Endothelial cell of umbilical vein (primary cell): ENCODE measurements at regions of chr6 and their contacts with region 1.

Region 1: DNA sequence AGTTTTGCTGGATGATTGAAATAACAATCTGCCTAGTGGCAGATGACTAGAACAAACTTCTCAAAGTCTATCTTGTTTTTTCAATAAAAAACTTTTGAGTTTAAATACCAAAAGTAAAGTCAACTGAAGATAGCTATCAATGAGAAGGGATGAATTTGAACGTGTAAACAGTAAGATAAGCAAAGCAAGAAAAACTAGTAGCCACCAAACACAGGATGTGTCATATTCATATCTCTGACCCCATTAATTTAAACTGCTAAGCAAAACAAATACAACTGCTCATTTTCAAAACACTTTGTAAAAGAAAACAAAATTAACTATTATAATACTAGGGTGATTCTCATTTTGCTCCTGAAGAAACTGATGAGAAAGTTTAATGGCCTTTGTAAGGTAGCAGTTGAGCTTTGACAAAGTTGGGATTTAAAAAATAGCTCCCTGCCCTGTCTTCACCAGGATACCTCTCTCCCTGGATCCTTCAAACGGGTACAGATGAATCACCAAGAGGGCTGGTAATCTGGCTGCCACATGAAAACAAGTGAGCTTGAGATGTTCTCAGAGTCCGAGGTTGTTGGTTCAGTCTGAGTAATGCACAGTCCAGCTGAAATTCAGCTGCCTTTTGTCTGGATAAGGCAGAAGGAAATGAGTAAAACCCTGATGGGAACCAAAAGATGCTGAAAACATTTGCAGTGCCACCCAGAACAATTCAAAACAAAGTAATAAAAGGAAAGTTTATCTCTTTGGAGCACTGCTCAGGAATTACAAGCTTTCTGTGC is 86.6 kb downstream of the GJA1 start:
- DNase-seq: peak; percentile 99
- H3K4me3 ChIP-seq: peak overlapping the region in 1 of 3 experiments; percentile 20
- H3K27ac ChIP-seq: peak overlapping the region; percentile 100
- H3K4me1 ChIP-seq: peaks cover 49% of the 10 kb centered on the region
- H3K27me3 ChIP-seq: no peaks in the 10 kb centered on the region
- CTCF ChIP-seq: no peak
- POLR2A ChIP-seq: peak; percentile 82

Region 2: GRCh38 chr6:120918137-120918536 is 603.9 kb before region 1 on chr6:
- CTCF ChIA-PET with region 1: no interaction called
- POLR2A ChIA-PET with region 1: no interaction called
- dilution Hi-C with region 1: no loop called
- intact Hi-C with region 1: no loop called
- DNase-seq: no peak
- H3K4me3 ChIP-seq: no peak overlapping the region
- H3K27ac ChIP-seq: no peak overlapping the region
- H3K4me1 ChIP-seq: no peaks in the 10 kb centered on the region
- H3K27me3 ChIP-seq: no peaks in the 10 kb centered on the region
- CTCF ChIP-seq: no peak
- POLR2A ChIP-seq: no peak

Region 3: GRCh38 chr6:121443971-121444541 is 78.0 kb before region 1 on chr6:
- CTCF ChIA-PET with region 1: interaction called, 41 read pairs
- POLR2A ChIA-PET with region 1: interaction called, 94 read pairs
- dilution Hi-C with region 1: no loop called
- intact Hi-C with region 1: no loop called
- DNase-seq: peak; percentile 70
- H3K4me3 ChIP-seq: no peak overlapping the region
- H3K27ac ChIP-seq: peak overlapping the region; percentile 28
- H3K4me1 ChIP-seq: peaks cover 43% of the 10 kb centered on the region
- H3K27me3 ChIP-seq: no peaks in the 10 kb centered on the region
- CTCF ChIP-seq: no peak
- POLR2A ChIP-seq: no peak

Region 4: GRCh38 chr6:121630716-121631115 is 108.6 kb after region 1 on chr6:
- CTCF ChIA-PET with region 1: interaction called, 5 read pairs
- POLR2A ChIA-PET with region 1: no interaction called
- dilution Hi-C with region 1: no loop called
- intact Hi-C with region 1: loop called (anchors 1 kb)
- DNase-seq: peak; percentile 80
- H3K4me3 ChIP-seq: no peak overlapping the region
- H3K27ac ChIP-seq: no peak overlapping the region
- H3K4me1 ChIP-seq: peaks cover 16% of the 10 kb centered on the region
- H3K27me3 ChIP-seq: no peaks in the 10 kb centered on the region
- CTCF ChIP-seq: no peak
- POLR2A ChIP-seq: no peak

Region 5: GRCh38 chr6:121694389-121695251 is 172.5 kb after region 1 on chr6:
- CTCF ChIA-PET with region 1: no interaction called
- POLR2A ChIA-PET with region 1: no interaction called
- dilution Hi-C with region 1: no loop called
- intact Hi-C with region 1: no loop called
- DNase-seq: peak; percentile 34
- H3K4me3 ChIP-seq: no peak overlapping the region
- H3K27ac ChIP-seq: no peak overlapping the region
- H3K4me1 ChIP-seq: peaks cover 11% of the 10 kb centered on the region
- H3K27me3 ChIP-seq: no peaks in the 10 kb centered on the region
- CTCF ChIP-seq: no peak
- POLR2A ChIP-seq: no peak

Region 6: DNA sequence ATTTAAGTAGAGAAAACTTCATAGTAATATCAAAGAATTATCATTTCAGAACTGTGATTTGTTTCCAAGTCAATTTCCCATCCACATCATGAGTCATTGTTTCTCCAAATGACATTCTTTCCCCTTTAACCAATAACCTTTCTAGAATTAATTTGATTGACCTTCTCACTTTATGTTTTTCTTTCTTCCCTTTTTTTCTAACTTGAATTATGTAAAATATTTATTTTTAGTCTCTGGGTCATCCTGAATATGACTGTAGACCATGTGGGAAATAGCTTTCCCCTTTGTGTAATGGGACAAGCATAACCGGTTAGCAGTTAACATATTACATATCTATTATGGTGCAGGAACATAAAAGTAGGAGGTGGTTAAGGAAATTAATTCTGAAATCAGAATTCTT is 204.5 kb after region 1 on chr6:
- CTCF ChIA-PET with region 1: no interaction called
- POLR2A ChIA-PET with region 1: no interaction called
- dilution Hi-C with region 1: no loop called
- intact Hi-C with region 1: loop called (anchors 2 kb)
- DNase-seq: peak; percentile 83
- H3K4me3 ChIP-seq: no peak overlapping the region
- H3K27ac ChIP-seq: peak overlapping the region; percentile 29
- H3K4me1 ChIP-seq: peaks cover 10% of the 10 kb centered on the region
- H3K27me3 ChIP-seq: no peaks in the 10 kb centered on the region
- CTCF ChIP-seq: no peak
- POLR2A ChIP-seq: no peak

Region 7: DNA sequence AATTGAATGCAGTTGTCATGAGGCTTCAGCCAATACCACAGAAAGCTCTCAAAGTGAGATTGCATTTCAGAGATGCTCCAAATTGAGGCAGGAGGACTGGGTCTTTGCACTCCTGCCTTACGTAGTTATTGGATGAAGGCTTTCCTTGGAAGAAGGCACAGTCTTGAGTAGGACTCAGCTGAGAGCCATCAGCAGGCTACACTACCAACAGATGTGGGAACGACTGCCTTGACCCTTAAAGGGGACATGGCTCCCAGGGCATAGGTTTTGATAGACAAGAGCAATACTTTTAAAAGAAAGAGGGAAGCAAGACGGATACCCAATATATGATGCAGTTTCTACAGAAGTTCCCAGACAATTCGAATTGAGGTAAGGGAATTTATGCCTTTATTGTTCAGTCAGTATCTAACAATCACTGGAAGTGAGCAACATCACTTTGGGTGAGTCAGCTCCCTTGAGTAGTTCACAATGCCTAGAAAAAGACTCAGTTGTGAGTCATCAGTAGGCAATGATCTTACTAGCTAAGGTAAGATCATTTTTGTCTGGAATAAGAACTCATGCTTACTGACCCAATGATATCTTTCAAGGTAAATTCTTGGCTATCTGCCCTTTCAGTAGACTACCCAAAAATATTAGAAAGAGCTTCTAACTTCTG is 304.2 kb after region 1 on chr6:
- CTCF ChIA-PET with region 1: no interaction called
- POLR2A ChIA-PET with region 1: no interaction called
- dilution Hi-C with region 1: no loop called
- intact Hi-C with region 1: loop called (anchors 1 kb)
- DNase-seq: peak; percentile 94
- H3K4me3 ChIP-seq: no peak overlapping the region
- H3K27ac ChIP-seq: peak overlapping the region; percentile 86
- H3K4me1 ChIP-seq: peaks cover 15% of the 10 kb centered on the region
- H3K27me3 ChIP-seq: no peaks in the 10 kb centered on the region
- CTCF ChIP-seq: no peak
- POLR2A ChIP-seq: no peak